Activated CD4-positive, alpha-beta T cell treated with anti-CD3 and anti-CD28 coated beads for 36 hours (primary cell): ENCODE measurements at regions of chr16 and their contacts with region 1.

Region 1: DNA sequence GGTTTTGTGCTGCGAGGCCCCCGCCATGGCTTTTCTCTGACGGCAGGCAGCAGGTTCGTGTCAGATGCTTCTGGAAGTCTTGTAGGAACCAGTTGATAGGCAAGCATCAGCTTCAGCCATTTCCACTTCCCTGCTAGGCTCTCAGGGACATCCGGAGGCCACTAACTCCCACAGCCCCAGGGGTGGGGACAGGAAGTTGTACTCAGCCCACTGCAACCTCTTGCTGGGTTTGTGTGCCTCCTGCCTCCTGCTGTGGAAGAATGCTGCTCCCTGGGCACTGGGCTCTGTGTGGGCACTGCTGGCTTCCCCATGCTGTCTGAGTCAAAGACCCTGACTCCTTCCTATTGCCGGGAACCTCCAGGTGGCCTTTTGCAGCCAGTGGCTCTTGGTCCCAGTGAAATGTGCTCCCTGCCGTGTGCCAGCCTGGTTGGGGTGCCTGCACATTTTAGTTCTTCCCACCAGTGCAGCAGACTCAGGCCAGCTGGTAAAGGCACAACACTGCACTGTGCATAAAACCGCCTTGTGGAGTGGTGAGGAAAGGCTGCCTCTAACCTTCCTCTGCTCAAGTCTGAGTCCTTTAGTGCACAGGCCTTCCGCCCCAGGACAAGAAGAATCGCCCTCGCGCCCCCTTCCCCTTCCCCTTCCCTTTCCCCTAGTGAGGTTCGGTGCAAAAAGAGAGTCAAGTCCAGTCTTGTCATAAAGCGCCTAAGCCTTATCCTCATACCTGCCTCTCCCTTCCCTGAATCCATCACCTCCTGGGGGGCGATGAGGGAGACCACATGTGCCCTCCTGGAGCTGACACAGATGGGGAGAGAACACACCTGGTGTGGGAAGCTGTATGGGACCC is 16.6 kb downstream of the LDHD start:
- DNase-seq: peak; percentile 68
- ATAC-seq: peak; percentile 45
- H3K4me3 Mint-ChIP-seq: peak overlapping the region; percentile 26
- H3K27ac Mint-ChIP-seq: peak overlapping the region; percentile 88
- H3K4me1 Mint-ChIP-seq: peaks cover 64% of the 10 kb centered on the region
- H3K27me3 Mint-ChIP-seq: no peaks in the 10 kb centered on the region

Region 2: GRCh38 chr16:75074920-75075687 is 24.9 kb before region 1 on chr16:
- CTCF ChIA-PET with region 1: interaction called, 3 read pairs
- POLR2A ChIA-PET with region 1: interaction called, 5 read pairs
- intact Hi-C with region 1: loop called in 1 of 2 experiments (anchors 1 kb)
- DNase-seq: peak; percentile 89
- ATAC-seq: peak; percentile 92
- H3K4me3 Mint-ChIP-seq: peak overlapping the region; percentile 54
- H3K27ac Mint-ChIP-seq: peak overlapping the region; percentile 97
- H3K4me1 Mint-ChIP-seq: peaks cover 62% of the 10 kb centered on the region
- H3K27me3 Mint-ChIP-seq: no peaks in the 10 kb centered on the region